Aorta (tissue), 5 donors: ENCODE measurements at regions of chr2 and their contacts with region 1.

Region 1: DNA sequence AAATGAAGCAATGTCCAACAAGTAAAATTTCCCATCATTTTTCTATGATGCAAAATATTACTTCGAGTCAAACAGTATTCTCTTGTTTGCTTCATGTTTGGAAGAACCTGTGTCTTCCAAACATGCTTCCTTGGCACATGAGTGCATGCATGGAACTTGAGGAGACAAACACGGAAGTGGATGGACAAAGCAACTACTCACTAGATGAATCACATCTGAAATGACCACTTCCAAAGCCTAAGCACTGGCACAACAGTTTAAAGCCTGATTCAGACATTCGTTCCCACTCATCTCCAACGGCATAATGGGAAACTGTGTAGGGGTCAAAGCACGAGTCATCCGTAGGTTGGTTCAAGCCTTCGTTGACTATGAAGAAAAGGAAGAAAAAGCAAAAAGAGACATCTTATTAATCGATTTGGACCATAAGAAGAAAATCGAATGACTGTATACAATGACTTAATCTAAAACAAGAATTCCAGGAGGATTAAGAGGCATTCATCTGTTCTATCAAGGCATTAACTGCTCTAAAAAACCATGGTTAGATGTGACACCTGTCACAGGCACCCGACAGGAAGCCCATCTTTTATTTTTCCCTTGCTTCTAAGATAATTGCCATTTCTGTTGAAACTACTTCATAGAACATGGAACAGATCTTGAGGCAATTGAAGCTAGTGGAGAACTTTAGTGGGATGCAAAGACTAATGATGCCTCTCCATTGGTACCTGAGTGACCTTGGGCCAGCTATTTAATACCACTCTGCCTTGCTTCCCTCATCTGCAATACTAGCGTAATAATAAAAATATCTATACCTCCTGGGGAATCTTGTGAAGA is 56.0 kb downstream of the ATIC start:
- DNase-seq: no peak
- ATAC-seq: no peak
- H3K4me3 ChIP-seq: no peak overlapping the region
- H3K27ac ChIP-seq: no peak overlapping the region
- H3K4me1 ChIP-seq: no peaks in the 10 kb centered on the region
- H3K27me3 ChIP-seq: no peaks in the 10 kb centered on the region

Region 2: DNA sequence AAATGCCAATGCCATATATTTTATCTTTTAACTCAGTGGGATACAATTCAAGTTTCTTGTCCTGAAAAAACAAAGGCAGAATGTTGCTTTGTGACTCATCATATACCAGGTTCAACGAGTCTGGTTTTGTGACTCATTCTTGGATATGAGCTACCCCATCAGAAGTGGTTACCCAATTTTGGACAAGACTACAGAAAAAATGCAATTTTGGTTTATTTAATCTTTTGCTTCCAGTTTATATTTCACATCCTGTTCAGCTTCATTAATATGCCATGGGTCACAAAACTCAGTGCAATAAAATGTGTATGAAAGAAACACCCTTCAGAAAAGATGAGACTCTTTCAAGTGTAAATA is 43.0 kb after region 1 on chr2:
- intact Hi-C with region 1: loop called in 1 of 2 experiments (anchors 10 kb)
- DNase-seq: no peak
- ATAC-seq: peak; percentile 37
- H3K4me3 ChIP-seq: no peak overlapping the region
- H3K27ac ChIP-seq: no peak overlapping the region
- H3K4me1 ChIP-seq: no peaks in the 10 kb centered on the region
- H3K27me3 ChIP-seq: no peaks in the 10 kb centered on the region

Region 3: GRCh38 chr2:215425021-215425782 is 57.3 kb after region 1 on chr2:
- intact Hi-C with region 1: loop called in 1 of 2 experiments (anchors 10 kb)
- DNase-seq: no peak
- ATAC-seq: no peak
- H3K4me3 ChIP-seq: no peak overlapping the region
- H3K27ac ChIP-seq: no peak overlapping the region
- H3K4me1 ChIP-seq: peaks cover 3 to 8% of the 10 kb centered on the region in 2 donors
- H3K27me3 ChIP-seq: no peaks in the 10 kb centered on the region